ENCODE measurements at regions of chrX and their contacts with region 1.

Region 1: GRCh38 chrX:87338510-87338909 is 179.1 kb upstream of the KLHL4 start:
- DNase-seq: no peak
- ATAC-seq: no peak

Region 2: DNA sequence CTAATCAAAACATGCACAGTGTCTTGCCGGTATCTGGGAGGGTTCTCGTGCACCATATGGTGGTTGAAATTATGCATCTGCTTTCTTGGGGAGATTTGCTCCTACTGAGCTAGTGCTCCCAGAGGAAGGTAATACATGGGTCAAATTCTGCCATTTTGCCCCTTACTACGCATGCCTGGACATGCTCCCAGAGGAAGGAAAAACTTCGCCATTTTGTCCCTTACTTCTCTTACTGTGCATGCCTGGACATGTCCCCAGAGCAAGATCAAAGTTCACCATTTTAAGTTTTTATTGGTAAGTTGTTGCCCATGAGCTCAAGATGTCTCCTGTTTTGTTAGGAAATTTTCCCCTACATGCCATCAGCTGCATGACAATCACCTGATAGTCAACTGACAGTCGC is 73.0 kb before region 1 on chrX:
- intact Hi-C with region 1: no loop called
- DNase-seq: no peak
- ATAC-seq: no peak

Region 3: DNA sequence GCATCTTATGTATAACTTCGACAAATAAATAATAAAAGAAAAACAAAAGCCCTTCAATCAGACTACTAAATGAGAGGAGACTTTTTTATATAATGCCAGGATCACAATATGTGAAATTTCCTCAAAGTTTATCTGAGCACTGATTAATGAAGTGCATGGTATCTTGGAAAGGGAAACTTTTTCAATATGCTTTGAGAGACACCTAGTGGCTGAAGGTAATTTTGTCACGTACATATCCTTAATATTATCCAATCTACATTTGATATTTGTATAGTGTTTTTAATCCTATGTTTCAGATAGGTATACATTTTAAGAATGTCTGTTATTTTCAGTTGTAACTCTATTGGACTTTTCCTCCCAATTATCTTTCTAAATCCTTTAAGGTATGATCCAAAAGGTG is 325.9 kb after region 1 on chrX:
- intact Hi-C with region 1: loop called (anchors 5 kb)
- DNase-seq: no peak
- ATAC-seq: no peak